PC-9 (cell line): ENCODE measurements at regions of chr7 and their contacts with region 1.

Region 1: GRCh38 chr7:16268821-16269768 is 152.2 kb downstream of the CRPPA start:
- DNase-seq: peak; percentile 76 to 91
- H3K4me3 ChIP-seq: 0 out of 2 replicates have a peak overlapping the region, but pooled peaks have one; percentile 12
- H3K27ac ChIP-seq: 0 out of 2 replicates have a peak overlapping the region, but pooled peaks have one; percentile 10
- H3K4me1 ChIP-seq: peaks cover 35% of the 10 kb centered on the region
- H3K27me3 ChIP-seq: no peaks in the 10 kb centered on the region
- CTCF ChIP-seq: no peak

Region 2: GRCh38 chr7:16062269-16062668 is 206.8 kb before region 1 on chr7:
- CTCF ChIA-PET with region 1: no interaction called
- POLR2A ChIA-PET with region 1: no interaction called
- intact Hi-C with region 1: no loop called
- DNase-seq: no peak
- H3K4me3 ChIP-seq: no peak overlapping the region
- H3K27ac ChIP-seq: no peak overlapping the region
- H3K4me1 ChIP-seq: no peaks in the 10 kb centered on the region
- H3K27me3 ChIP-seq: no peaks in the 10 kb centered on the region
- CTCF ChIP-seq: no peak

Region 3: GRCh38 chr7:16083931-16084330 is 185.2 kb before region 1 on chr7:
- CTCF ChIA-PET with region 1: no interaction called
- POLR2A ChIA-PET with region 1: no interaction called
- intact Hi-C with region 1: loop called (anchors 1 kb)
- DNase-seq: peak in 1 of 2 experiments; percentile 81
- H3K4me3 ChIP-seq: no peak overlapping the region
- H3K27ac ChIP-seq: peak overlapping the region; percentile 3; the same call in 1 of the 2 replicates
- H3K4me1 ChIP-seq: peaks cover 15% of the 10 kb centered on the region
- H3K27me3 ChIP-seq: no peaks in the 10 kb centered on the region
- CTCF ChIP-seq: no peak

Region 4: DNA sequence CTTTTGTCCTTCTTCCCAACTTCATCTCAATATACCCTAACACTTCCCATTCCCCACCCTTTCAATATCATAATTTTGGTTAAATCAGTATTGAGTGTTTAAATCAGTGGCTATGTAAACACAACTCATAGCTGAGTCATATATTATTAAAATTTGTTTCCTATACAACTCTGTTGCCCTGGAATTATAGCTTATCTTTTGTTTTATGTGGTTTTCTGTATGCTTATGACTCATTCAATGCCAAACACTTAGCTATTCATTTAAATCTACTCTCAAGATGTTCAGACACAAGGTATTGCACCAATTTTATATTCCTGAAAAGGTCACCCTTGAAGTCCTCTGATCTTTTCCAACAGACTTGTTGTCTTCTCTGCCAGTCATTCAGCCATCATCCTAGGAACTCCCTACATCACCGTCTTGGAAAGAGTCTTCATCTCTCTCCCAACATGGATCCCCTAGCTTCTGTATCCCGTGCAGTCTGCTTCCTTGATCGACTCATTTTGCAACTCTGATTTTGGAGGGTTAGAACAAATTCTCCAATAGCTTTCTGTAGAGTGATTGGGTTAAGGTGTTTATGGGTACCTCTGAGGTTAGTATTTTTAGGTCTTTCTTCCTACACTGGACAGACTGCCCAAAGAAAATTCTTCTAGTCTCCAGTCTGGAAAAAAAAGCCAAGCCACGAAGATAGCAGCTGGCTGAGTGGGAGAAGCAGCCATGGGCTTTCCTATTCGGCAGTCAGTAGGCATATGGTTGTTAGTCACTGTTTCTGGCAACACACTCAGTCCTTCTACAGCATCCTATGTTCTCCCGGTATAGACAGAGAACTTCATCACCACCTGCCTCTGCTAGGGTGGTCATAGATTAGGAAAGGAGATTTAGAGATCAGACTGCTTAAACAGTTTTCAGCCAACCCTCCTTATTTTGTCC is 50.2 kb after region 1 on chr7:
- CTCF ChIA-PET with region 1: interaction called, 3 read pairs
- POLR2A ChIA-PET with region 1: interaction called, 8 read pairs
- intact Hi-C with region 1: loop called (anchors 1 kb)
- DNase-seq: peak; percentile 22 to 98
- H3K4me3 ChIP-seq: 0 out of 2 replicates have a peak overlapping the region, but pooled peaks have one; percentile 1
- H3K27ac ChIP-seq: peak overlapping the region; percentile 61
- H3K4me1 ChIP-seq: peaks cover 36% of the 10 kb centered on the region
- H3K27me3 ChIP-seq: no peaks in the 10 kb centered on the region
- CTCF ChIP-seq: no peak

Region 5: DNA sequence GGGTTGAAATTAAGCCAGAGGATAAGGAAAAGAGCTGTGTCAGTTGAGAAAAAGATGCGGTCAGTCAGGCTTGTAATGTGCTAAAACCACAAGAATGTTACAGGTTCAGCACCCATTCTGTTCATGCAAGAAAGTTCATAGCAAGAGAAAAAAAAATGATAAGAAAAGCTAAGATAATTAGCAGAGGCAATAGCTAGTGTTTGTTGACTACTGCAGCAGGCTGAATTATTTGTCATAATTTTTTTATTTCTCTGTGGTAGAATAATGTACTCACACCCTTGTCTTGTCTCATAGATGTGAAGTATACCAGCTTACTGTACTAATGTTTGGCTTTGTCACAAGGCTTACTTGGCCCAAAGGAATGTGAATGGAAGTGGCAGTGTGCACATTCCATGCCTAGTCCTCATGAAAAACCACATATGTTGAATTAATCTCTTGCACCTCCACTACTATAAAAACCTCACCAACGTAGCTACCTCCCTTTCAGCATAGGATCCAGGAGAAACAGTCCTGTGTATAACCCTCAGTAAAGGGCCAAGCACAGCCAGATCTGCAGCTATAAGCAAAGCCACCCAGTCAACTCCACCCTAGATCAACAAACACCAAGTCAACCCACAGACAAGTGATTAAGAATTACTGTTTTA is 77.4 kb after region 1 on chr7:
- CTCF ChIA-PET with region 1: no interaction called
- POLR2A ChIA-PET with region 1: no interaction called
- intact Hi-C with region 1: loop called (anchors 1 kb)
- DNase-seq: peak; percentile 60 to 98
- H3K4me3 ChIP-seq: no peak overlapping the region; the same call in 1 of the 2 replicates
- H3K27ac ChIP-seq: peak overlapping the region; percentile 80
- H3K4me1 ChIP-seq: peaks cover 37% of the 10 kb centered on the region
- H3K27me3 ChIP-seq: no peaks in the 10 kb centered on the region
- CTCF ChIP-seq: no peak

Region 6: GRCh38 chr7:16420649-16421332 is 151.7 kb after region 1 on chr7:
- CTCF ChIA-PET with region 1: interaction called, 3 read pairs
- POLR2A ChIA-PET with region 1: interaction called, 9 read pairs
- intact Hi-C with region 1: loop called (anchors 1 kb)
- DNase-seq: peak; percentile 90 to 92
- H3K4me3 ChIP-seq: peak overlapping the region; percentile 68
- H3K27ac ChIP-seq: peak overlapping the region; percentile 89
- H3K4me1 ChIP-seq: peaks cover 56% of the 10 kb centered on the region
- H3K27me3 ChIP-seq: no peaks in the 10 kb centered on the region
- CTCF ChIP-seq: peak; percentile 53; the same call in 1 of the 2 replicates